ENCODE measurements at regions of chr9 and their contacts with region 1.

Region 1: GRCh38 chr9:119968836-119969707 is 599.8 kb upstream of the BRINP1 start:
- DNase-seq: peak; percentile 93

Region 2: DNA sequence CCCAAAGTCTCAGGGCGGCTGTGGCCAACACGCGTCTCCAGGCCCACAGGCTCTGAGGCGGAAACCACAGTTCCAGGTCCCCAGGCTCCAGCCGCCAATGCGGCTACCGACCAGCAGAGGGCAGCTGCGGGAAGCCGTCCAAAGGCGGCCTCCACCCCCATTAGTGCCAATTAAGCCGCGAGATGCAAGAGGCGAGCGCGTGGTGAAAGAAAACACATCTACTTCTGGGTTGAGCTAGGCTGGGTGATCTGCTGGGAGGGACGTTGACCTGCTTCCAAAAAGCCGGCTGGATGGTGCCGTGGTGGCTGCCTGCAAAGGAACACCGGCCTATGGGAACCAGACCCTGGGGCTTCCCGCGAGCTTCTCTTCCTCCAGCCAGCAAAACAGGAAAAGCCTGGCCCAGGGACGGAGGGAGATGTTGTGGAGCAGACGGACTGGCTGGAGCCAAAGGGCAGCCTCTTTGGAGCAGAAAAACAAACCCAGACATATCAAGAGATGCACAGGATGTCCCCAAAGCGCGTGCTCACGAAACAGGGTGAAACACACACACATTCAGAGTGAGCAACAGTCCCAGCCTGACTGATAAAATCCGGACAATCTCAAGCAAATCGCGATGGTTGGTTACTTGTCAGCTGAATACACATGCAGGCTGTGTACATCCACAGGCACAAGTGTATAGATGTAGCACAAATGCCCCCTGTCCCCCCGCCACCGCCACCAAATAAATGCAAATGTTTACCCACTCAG is 412.8 kb before region 1 on chr9:
- intact Hi-C with region 1: loop called in 1 of 2 experiments (anchors 10 kb)
- DNase-seq: peak; percentile 92